ENCODE measurements at regions of chr18 and their contacts with region 1.

Region 1: DNA sequence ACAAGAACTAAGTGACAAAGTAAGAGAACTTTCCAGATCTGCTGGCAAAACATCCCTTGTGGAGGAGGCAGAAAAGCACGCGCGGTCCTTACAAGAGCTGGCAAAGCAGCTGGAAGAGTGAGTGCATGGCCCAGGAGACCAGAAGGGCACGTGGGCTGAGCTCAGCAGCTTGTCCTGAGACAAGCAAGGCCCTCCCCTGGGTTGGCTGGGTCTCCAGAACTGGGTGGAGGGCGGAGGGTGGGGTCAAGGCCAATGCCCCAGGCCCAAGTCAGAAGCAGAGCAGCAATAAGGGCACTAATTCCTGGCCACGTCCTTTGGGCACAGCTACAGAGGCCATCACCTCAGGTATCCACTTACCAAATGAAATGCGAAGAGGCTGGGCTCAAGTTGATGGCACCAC is 110.6 kb upstream of the TTC39C start:
- DNase-seq: no peak
- ATAC-seq: no peak
- H3K4me3 ChIP-seq: no peak overlapping the region
- H3K27ac ChIP-seq: no peak overlapping the region
- H3K4me1 ChIP-seq: no peaks in the 10 kb centered on the region
- CTCF ChIP-seq: no peak
- EP300 ChIP-seq: no peak
- POLR2A ChIP-seq: no peak
- RAD21 ChIP-seq: no peak

Region 2: GRCh38 chr18:23844991-23845680 is 58.8 kb before region 1 on chr18:
- CTCF ChIA-PET with region 1: no interaction called
- POLR2A ChIA-PET with region 1: no interaction called
- DNase-seq: peak in 1 of 2 experiments; percentile 15
- ATAC-seq: peak in 1 of 2 experiments; percentile 56; a peak in 2 of 6 replicates
- H3K4me3 ChIP-seq: no peak overlapping the region
- H3K27ac ChIP-seq: no peak overlapping the region
- H3K4me1 ChIP-seq: no peaks in the 10 kb centered on the region
- CTCF ChIP-seq: no peak
- EP300 ChIP-seq: no peak
- POLR2A ChIP-seq: no peak
- RAD21 ChIP-seq: no peak

Region 3: DNA sequence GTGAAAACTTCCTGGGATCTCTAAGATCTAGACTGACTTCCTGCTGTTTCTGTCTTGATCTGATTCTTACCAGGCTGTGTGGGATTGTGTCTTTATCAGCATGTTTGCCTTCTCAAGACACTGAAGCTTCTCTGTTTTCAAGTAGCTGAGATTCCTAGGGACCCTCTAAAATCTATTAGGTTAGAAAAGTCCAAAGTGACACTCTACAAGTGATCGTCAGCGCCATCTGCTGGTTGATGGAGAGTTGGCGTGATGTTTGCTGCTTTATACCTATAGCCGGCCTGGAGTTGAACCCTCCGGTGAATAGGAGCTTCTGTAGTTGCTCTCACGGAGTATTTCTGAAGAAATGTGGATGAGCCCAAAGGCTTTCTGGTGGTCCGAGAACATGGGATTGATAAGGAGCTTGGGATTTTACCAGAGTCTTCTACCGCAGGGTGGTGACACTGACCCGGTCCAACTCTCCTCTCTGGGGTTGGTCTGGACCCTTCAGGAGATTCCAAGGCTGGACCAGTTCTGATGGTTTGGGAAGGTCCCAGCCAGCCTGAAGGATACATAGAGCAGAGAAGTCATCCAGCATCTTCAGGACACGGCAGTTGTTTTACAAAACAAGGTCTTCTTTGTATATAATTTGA is 14.5 kb after region 1 on chr18:
- CTCF ChIA-PET with region 1: interaction called, 14 read pairs
- POLR2A ChIA-PET with region 1: no interaction called
- DNase-seq: peak; percentile 44 to 46
- ATAC-seq: peak; percentile 66 to 82; a peak in 5 of 6 replicates
- H3K4me3 ChIP-seq: no peak overlapping the region
- H3K27ac ChIP-seq: no peak overlapping the region
- H3K4me1 ChIP-seq: no peaks in the 10 kb centered on the region
- CTCF ChIP-seq: peak; percentile 72
- EP300 ChIP-seq: no peak
- POLR2A ChIP-seq: no peak
- RAD21 ChIP-seq: peak; percentile 48 to 50; a peak in 4 of 5 replicates

Measured in A549 (cell line).